ENCODE measurements at regions of chr4 and their contacts with region 1.

Region 1: GRCh38 chr4:83074086-83074704 is 39.2 kb downstream of the COPS4 start:
- DNase-seq: peak; percentile 43
- H3K4me3 ChIP-seq: no peak overlapping the region
- H3K27ac ChIP-seq: no peak overlapping the region
- H3K27me3 ChIP-seq: no peaks in the 10 kb centered on the region
- CTCF ChIP-seq: peak; percentile 72

Region 2: GRCh38 chr4:82706349-82707000 is 367.7 kb before region 1 on chr4:
- CTCF ChIA-PET with region 1: no interaction called
- POLR2A ChIA-PET with region 1: no interaction called
- DNase-seq: no peak
- H3K4me3 ChIP-seq: no peak overlapping the region
- H3K27ac ChIP-seq: no peak overlapping the region
- H3K27me3 ChIP-seq: no peaks in the 10 kb centered on the region
- CTCF ChIP-seq: no peak

Region 3: GRCh38 chr4:83110223-83110945 is 36.2 kb after region 1 on chr4:
- CTCF ChIA-PET with region 1: interaction called, 27 read pairs
- POLR2A ChIA-PET with region 1: no interaction called
- DNase-seq: peak; percentile 21
- H3K4me3 ChIP-seq: peak overlapping the region; percentile 62
- H3K27ac ChIP-seq: no peak overlapping the region
- H3K27me3 ChIP-seq: no peaks in the 10 kb centered on the region
- CTCF ChIP-seq: peak; percentile 77

Region 4: GRCh38 chr4:83252782-83253405 is 178.7 kb after region 1 on chr4:
- CTCF ChIA-PET with region 1: interaction called, 11 read pairs
- POLR2A ChIA-PET with region 1: interaction called, 3 read pairs
- DNase-seq: no peak
- H3K4me3 ChIP-seq: no peak overlapping the region
- H3K27ac ChIP-seq: no peak overlapping the region
- H3K27me3 ChIP-seq: no peaks in the 10 kb centered on the region
- CTCF ChIP-seq: peak; percentile 68

Region 5: GRCh38 chr4:83259586-83259985 is 185.4 kb after region 1 on chr4:
- CTCF ChIA-PET with region 1: interaction called, 55 read pairs
- POLR2A ChIA-PET with region 1: interaction called, 3 read pairs
- DNase-seq: no peak
- H3K4me3 ChIP-seq: no peak overlapping the region
- H3K27ac ChIP-seq: no peak overlapping the region
- H3K27me3 ChIP-seq: no peaks in the 10 kb centered on the region
- CTCF ChIP-seq: no peak

Region 6: DNA sequence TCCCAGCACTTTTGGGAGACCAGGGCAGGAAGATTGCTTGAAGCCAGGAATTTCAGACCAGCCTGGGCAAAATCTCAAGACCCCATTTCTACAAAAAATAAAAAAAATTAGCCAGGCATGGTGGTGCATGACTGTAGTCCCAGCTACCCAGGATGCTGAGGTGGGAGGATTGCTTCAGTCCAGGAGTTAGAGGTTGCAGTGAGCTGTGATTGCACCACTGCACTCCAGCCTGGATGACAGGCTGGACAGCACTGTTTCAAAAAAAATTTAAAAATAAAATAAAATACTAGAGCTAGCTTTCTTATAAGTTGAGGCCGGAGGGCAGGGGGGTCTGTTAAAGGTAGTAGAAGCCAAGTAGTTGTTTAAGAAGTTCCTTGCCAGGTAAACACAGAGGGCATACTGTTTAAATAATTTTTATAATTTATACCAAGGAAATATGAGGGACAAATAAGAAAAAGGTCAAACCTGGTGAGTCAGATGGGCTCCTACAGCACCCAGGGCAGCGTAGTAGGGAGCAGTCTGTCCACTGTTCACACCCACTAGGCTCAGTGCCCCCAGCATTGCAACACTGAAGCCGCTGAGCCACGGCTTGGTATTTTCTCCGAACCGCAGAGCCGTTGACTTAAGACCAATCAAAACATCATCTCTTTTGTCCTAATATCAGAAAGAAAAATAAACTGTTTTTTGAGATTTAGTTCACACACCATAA is 193.1 kb after region 1 on chr4:
- CTCF ChIA-PET with region 1: interaction called, 55 read pairs
- POLR2A ChIA-PET with region 1: no interaction called
- DNase-seq: no peak
- H3K4me3 ChIP-seq: no peak overlapping the region
- H3K27ac ChIP-seq: no peak overlapping the region
- H3K27me3 ChIP-seq: no peaks in the 10 kb centered on the region
- CTCF ChIP-seq: no peak